ENCODE measurements at regions of chr7 and their contacts with region 1.

Region 1: GRCh38 chr7:42661312-42661711 is 250.6 kb downstream of the C7orf25 start:
- DNase-seq: no peak
- H3K4me3 ChIP-seq: no peak overlapping the region
- H3K27ac ChIP-seq: no peak overlapping the region
- H3K4me1 ChIP-seq: no peaks in the 10 kb centered on the region
- H3K27me3 ChIP-seq: no peaks in the 10 kb centered on the region
- CTCF ChIP-seq: no peak

Region 2: DNA sequence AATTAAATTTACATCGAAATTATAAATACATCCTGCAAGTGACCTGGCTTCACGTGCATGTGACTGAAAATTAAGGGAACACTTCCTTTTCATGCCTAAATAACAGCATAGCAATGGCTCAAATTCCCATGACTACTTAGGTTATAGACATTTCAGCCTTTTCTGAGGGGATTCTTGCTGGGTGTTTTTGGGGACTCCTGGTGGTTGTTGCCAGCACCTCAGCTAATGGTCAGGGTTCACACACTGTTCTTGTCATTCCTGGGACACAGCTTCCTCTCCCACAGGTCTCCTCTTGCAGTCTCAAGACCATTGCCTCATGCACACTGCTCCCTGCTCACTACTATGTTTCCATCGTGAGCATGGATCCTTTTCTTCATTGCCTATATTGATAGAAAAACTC is 275.4 kb before region 1 on chr7:
- intact Hi-C with region 1: no loop called
- DNase-seq: no peak
- H3K4me3 ChIP-seq: no peak overlapping the region
- H3K27ac ChIP-seq: no peak overlapping the region
- H3K4me1 ChIP-seq: no peaks in the 10 kb centered on the region
- H3K27me3 ChIP-seq: no peaks in the 10 kb centered on the region
- CTCF ChIP-seq: no peak

Region 3: DNA sequence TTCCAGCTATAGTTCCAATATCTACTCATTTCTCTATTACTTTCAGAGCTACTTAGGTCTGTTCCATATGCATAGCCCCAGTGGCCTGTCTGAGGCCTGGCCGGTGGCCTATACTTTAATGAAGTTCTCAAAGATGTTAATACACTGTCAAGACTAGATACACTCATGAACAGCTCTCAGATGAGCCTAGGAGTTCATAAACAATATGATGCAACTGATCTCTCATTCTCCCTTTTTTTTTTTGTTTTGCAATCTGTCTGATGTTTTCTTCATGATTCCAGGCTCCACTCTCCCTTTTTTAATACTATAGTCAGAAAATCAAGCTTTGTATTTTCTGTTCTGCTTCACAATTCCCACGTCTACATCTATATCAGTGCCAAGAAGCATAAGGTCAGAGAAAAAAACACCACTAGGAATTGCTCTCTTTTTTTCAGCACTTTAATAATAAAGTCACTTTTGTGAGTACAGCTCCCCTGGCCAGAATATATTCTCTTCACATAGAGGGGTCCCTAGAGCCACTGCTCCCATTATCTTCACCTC is 70.5 kb before region 1 on chr7:
- intact Hi-C with region 1: no loop called
- DNase-seq: no peak
- H3K4me3 ChIP-seq: no peak overlapping the region
- H3K27ac ChIP-seq: no peak overlapping the region
- H3K4me1 ChIP-seq: no peaks in the 10 kb centered on the region
- H3K27me3 ChIP-seq: no peaks in the 10 kb centered on the region
- CTCF ChIP-seq: no peak

Region 4: DNA sequence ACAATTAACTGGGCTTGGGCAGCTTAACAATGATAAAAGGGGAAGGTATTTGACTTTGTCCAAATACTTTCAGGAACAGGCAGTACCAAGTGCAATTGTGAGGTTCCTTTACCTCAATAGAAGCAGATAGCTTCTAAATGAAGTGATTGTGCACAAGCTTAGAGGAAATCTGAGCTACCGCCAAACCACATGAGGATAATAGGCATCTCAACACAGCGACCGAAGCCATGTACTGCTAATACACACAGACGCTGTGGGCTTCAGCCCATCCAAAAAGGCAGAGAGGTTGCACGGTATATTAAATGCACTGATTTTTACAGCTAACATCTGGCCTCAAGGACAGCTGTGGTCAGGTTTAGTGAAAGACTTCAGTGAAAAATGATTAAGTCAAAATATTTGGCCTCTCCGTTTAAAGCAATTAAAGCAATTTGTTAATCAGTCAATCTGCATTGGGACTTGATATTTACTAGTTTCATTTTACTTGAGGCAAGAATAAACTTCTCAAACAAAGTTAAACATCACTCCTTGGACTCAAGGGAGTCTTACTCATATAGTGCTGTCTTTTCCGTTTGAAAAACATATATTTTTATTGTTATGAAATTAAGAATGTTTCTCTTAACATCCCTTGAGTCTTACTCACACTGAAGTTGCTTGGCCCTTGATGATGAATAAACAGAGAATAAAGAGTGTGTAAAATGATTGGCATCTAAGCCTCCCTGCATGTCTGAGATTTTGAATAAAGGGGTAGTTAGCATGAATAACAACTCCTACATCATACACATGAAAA is 55.7 kb before region 1 on chr7:
- intact Hi-C with region 1: loop called (anchors 10 kb)
- DNase-seq: no peak
- H3K4me3 ChIP-seq: no peak overlapping the region
- H3K27ac ChIP-seq: no peak overlapping the region
- H3K4me1 ChIP-seq: peaks cover 0 to under 1% (median 0%) of the 10 kb centered on the region in 4 donors
- H3K27me3 ChIP-seq: no peaks in the 10 kb centered on the region
- CTCF ChIP-seq: no peak